Activated naive CD4-positive, alpha-beta T cell treated with anti-CD3 and anti-CD28 coated beads for 36 hours (primary cell): ENCODE measurements at regions of chr9 and their contacts with region 1.

Region 1: GRCh38 chr9:26723486-26723885 is 169.1 kb downstream of the CAAP1 start:
- DNase-seq: peak; percentile 25
- H3K4me3 Mint-ChIP-seq: no peak overlapping the region
- H3K27ac Mint-ChIP-seq: no peak overlapping the region
- H3K4me1 Mint-ChIP-seq: no peaks in the 10 kb centered on the region
- H3K27me3 Mint-ChIP-seq: peaks cover 12% of the 10 kb centered on the region

Region 2: DNA sequence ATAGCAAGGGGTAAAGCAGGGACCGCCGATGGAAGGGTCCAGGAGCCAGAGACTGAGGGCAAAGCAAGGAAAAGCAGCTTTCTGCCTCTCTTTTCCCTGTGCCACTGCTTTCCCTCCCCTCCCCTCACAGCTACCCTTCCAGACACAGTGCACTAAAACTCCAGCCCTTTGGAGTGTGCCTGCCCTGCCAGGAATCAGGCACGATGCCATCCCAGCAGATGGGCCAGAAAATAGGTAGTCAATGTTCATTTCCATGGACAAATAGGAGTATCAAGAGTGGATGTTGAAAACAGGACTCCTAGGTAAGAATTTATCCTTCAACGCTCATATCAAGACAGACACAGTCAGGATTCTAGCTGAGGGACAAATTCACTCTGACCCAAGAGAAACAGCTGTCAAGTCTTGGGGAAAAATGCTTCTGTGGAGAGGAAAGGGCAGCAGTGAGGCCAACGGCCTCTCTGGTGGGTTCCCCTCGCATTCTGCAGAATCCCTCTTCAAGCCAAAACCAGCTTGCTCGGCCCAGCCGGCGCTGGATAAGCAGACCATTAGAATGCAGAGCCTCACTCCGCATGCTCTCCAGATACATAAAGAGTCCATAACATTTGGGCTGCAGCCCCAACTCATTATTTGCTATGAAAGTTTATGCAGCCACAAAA is 31.2 kb after region 1 on chr9:
- CTCF ChIA-PET with region 1: no interaction called
- intact Hi-C with region 1: no loop called
- DNase-seq: no peak
- H3K4me3 Mint-ChIP-seq: no peak overlapping the region
- H3K27ac Mint-ChIP-seq: no peak overlapping the region
- H3K4me1 Mint-ChIP-seq: no peaks in the 10 kb centered on the region
- H3K27me3 Mint-ChIP-seq: peaks cover 6% of the 10 kb centered on the region

Region 3: GRCh38 chr9:26809795-26810194 is 86.3 kb after region 1 on chr9:
- CTCF ChIA-PET with region 1: no interaction called
- intact Hi-C with region 1: no loop called
- DNase-seq: no peak
- H3K4me3 Mint-ChIP-seq: no peak overlapping the region
- H3K27ac Mint-ChIP-seq: no peak overlapping the region
- H3K4me1 Mint-ChIP-seq: no peaks in the 10 kb centered on the region
- H3K27me3 Mint-ChIP-seq: no peaks in the 10 kb centered on the region

Region 4: DNA sequence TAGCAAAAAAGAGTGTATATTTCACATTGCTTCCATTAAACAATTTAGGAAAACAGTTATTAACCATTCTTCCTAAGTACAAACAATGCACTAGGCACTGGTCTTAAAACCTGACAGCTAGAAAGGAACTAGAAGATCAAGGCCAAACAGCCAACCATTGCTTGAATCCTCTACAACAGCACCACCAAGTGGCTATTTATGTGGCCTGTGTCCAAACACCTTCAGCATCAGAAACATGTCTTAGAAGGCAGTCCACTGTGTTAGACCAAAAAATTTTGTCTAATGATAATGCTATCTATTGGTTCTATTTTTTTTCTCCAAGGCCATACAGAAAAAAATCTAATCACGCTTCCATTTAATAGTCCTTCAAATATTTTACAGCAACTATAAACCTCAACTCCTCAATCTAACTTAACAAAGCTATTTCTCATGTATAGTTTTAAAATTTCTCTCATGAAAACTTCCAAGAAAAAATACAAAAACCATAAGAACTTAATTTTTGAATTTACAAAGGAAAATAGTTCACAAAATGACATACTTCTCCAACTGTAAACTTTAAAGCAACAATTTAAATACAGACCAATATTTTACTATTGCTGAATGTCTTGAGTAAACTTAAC is 133.0 kb after region 1 on chr9:
- CTCF ChIA-PET with region 1: no interaction called
- intact Hi-C with region 1: loop called (anchors 1 kb)
- DNase-seq: peak; percentile 37
- H3K4me3 Mint-ChIP-seq: no peak overlapping the region
- H3K27ac Mint-ChIP-seq: no peak overlapping the region
- H3K4me1 Mint-ChIP-seq: peaks cover 2% of the 10 kb centered on the region
- H3K27me3 Mint-ChIP-seq: no peaks in the 10 kb centered on the region